ENCODE measurements at regions of chr9 and their contacts with region 1.

Region 1: DNA sequence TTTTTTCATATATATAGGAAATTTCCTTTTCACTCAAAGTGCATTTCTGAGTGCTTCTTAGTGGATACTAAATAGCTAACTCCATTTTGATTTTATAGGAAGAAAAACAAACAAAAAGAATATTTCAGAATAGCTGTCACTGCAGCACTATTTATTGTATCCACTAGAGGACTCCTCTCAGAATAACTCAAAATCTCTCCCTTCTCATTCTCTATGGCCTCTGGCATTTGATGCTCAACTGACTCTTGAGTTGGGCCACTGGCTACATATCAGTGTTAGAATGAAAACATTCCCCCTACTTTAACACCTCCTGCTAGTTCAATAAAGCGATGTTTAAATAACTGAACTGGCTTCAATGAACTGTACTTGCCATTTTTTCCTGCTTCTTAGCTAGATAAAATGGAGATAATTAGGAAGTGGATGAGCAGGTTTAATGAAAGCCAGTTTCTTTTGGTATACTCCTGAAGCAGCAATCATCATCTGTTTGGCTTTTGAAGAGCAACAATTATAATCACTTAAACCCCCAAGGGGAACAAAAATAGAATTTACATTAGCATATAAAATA is 16.6 kb upstream of the ELAVL2 start:
- DNase-seq: no peak
- ATAC-seq: no peak
- H3K4me3 ChIP-seq: no peak overlapping the region
- H3K4me3 Mint-ChIP-seq: no peak overlapping the region
- H3K27ac ChIP-seq: no peak overlapping the region
- H3K27ac Mint-ChIP-seq: no peak overlapping the region
- H3K4me1 ChIP-seq: no peaks in the 10 kb centered on the region
- H3K4me1 Mint-ChIP-seq: no peaks in the 10 kb centered on the region
- H3K27me3 ChIP-seq: no peaks in the 10 kb centered on the region
- H3K27me3 Mint-ChIP-seq: no peaks in the 10 kb centered on the region
- CTCF ChIP-seq: no peak

Region 2: DNA sequence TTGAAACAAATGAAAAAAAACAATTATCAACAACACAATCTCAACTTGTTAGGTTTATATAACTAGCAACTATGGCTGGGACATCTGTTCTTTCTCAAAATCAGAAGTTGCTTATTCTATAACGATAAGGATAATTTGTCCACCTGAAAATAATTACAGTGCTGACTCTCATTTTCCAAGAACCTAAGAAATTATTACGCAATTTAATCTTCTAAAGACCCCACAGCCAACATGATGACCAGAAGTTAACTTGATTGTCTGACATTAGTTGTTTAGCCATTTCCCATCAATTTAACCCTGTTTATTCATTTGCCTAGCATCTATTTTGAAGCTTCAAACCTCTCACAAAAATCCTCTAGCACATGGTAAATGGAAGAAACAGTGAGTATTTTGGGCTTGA is 310.4 kb before region 1 on chr9:
- CTCF ChIA-PET with region 1: no interaction called
- POLR2A ChIA-PET with region 1: no interaction called
- intact Hi-C with region 1: no loop called
- DNase-seq: no peak
- ATAC-seq: no peak
- H3K4me3 ChIP-seq: no peak overlapping the region
- H3K4me3 Mint-ChIP-seq: no peak overlapping the region
- H3K27ac ChIP-seq: no peak overlapping the region
- H3K27ac Mint-ChIP-seq: no peak overlapping the region
- H3K4me1 ChIP-seq: no peaks in the 10 kb centered on the region
- H3K4me1 Mint-ChIP-seq: no peaks in the 10 kb centered on the region
- H3K27me3 ChIP-seq: no peaks in the 10 kb centered on the region
- H3K27me3 Mint-ChIP-seq: peaks cover 2% of the 10 kb centered on the region
- CTCF ChIP-seq: no peak

Region 3: GRCh38 chr9:23790351-23791260 is 52.0 kb before region 1 on chr9:
- CTCF ChIA-PET with region 1: no interaction called
- POLR2A ChIA-PET with region 1: no interaction called
- intact Hi-C with region 1: loop called in 1 of 2 experiments (anchors 10 kb)
- DNase-seq: no peak
- ATAC-seq: no peak
- H3K4me3 ChIP-seq: no peak overlapping the region
- H3K4me3 Mint-ChIP-seq: no peak overlapping the region
- H3K27ac ChIP-seq: no peak overlapping the region
- H3K27ac Mint-ChIP-seq: no peak overlapping the region
- H3K4me1 ChIP-seq: no peaks in the 10 kb centered on the region
- H3K4me1 Mint-ChIP-seq: no peaks in the 10 kb centered on the region
- H3K27me3 ChIP-seq: no peaks in the 10 kb centered on the region
- H3K27me3 Mint-ChIP-seq: no peaks in the 10 kb centered on the region
- CTCF ChIP-seq: no peak